ENCODE measurements at regions of chr19 and their contacts with region 1.

Region 1: DNA sequence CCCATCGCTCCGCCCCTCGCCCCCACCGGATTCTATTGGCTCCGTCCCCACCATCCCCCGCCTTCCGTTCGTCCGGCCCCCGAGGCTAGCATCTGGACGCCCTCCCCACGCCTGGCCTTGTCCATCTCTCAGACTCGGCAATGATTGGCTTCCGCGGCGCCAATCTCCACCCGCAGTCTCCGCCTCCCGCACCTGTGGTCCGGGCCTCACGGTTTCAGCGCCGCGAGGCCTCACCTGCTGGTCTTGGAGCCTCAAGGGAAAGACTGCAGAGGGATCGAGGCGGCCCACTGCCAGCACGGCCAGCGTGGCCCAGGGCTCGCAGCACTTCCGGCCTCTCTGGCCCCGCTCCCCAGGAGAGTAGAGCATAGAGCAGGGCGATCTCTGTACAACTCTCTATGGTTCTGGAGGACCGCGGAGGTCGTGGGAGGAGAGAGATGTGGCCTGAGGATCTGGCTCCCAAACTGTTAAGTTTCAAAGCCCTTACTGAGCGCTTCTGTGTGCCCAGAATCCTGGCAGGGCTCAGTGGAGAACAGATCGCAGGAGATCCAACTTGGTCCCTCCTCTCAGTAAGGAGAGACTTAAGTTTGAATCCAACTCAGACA is at the start of gene ERCC1:
- DNase-seq: peak; percentile 94 to 95
- ATAC-seq: peak; percentile 81 to 90 (median 86)
- H3K4me3 ChIP-seq: peak within 1 kb of the TSS; percentile 42 to 81 (median 72)
- H3K27ac ChIP-seq: peak within 1 kb of the TSS; percentile 34 to 96 (median 92)
- H3K4me1 ChIP-seq: peaks cover 4 to 68% (median 45%) of the 10 kb centered on the region in 9 donors
- H3K27me3 ChIP-seq: peaks cover 0 to 7% (median 0%) of the 10 kb centered on the region in 7 donors
- CTCF ChIP-seq: no peak
- total RNA-seq, gene ERCC1: 113 to 194 (median 136) TPM

Region 2: DNA sequence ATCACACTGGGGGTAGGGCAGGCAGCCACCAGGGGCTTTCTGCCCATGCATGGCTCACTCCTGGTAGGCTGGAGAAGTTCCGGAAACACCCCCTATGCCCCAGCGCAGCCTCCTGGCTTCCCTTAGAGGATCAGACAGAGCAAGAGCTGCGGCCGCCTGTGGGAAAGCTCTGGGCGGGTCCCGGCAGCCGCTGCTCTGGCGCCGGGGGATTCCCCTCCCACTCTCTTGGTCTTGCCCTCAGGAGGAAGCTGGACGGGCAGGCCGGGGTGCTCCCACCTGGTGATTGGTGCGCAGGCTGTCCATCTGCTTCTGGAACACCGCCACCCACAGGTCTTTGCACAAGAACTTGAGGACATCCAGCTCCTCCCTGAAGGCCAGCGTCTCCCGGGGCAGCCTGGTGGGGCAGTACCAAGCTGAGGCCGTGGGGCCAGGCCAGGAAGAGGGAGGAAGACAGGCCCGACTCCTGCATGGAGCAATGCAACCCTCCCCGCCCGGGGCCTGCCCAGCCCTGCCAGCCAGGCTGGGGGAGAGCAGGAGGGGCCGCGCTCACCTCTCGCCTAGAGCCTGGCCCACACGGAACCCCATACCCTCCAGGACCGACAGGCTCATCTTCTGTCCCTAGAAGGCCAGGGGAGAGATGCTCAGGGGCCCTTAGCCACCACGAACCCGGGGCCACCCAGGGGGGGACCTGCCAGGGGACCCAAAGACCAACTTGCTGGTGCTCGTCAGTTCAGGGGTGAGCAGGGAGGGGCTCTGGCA is 258.9 kb before region 1 on chr19:
- intact Hi-C with region 1: no loop called
- DNase-seq: peak; percentile 36 to 37
- ATAC-seq: peak; percentile 31 to 73 (median 61)
- H3K4me3 ChIP-seq: no peak overlapping the region
- H3K27ac ChIP-seq: peak overlapping the region in 2 of 10 donors; percentile 19 to 35
- H3K4me1 ChIP-seq: peaks cover 7 to 36% (median 26%) of the 10 kb centered on the region in 9 donors
- H3K27me3 ChIP-seq: peaks cover 0 to 20% (median 15%) of the 10 kb centered on the region in 7 donors
- CTCF ChIP-seq: no peak

Region 3: GRCh38 chr19:45352914-45353796 is 70.5 kb before region 1 on chr19:
- intact Hi-C with region 1: no loop called
- DNase-seq: no peak
- ATAC-seq: no peak
- H3K4me3 ChIP-seq: no peak overlapping the region
- H3K27ac ChIP-seq: no peak overlapping the region
- H3K4me1 ChIP-seq: no peaks in the 10 kb centered on the region
- H3K27me3 ChIP-seq: peaks cover 0 to 1% (median 0%) of the 10 kb centered on the region in 7 donors
- CTCF ChIP-seq: no peak

Region 4: DNA sequence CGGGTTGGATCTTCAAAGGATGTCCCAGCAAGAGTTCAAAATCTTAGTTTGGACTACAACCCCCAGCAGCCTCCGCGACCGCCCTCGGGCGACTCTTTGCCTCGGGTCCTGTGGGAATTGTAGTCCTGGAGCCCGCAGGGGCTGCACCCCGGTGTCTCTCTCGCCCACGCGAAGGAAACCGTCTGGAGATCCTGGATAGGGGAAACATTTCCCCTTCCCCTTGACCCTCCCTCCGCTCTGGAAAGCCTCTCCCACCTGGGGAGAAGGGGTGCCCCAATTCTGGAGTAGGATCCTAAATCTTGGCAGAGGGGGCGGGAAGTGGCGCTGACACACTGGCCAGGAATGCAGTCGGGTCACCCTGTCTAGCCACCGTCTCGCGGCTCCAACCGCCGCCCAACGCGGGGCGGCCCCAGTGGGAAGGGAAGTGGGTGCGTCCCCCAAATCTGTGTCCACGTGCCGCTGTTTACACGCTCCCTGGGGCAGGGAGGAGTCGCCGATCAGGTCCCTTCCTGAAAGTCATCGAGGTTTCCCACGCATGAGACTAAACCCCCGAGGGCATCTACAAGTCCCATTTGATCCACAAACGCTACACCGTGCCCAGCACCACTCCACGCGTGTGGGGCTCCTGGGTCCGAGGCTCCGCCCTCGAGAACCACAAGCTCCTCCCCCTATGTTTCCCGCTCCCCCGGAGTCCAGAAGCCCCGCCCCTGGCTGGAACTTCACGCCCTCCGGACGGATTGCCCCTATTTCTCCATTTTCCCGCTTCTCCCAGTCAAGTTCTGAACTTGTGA is 18.1 kb before region 1 on chr19:
- intact Hi-C with region 1: loop called in 2 of 10 experiments (anchors 1 to 2 kb)
- DNase-seq: peak; percentile 87 to 94
- ATAC-seq: peak; percentile 55 to 85 (median 77)
- H3K4me3 ChIP-seq: peak overlapping the region; percentile 55 to 99 (median 72)
- H3K27ac ChIP-seq: peak overlapping the region; percentile 86 to 97 (median 94)
- H3K4me1 ChIP-seq: peaks cover 7 to 54% (median 44%) of the 10 kb centered on the region in 9 donors
- H3K27me3 ChIP-seq: peaks cover 0 to 32% (median 0%) of the 10 kb centered on the region in 7 donors
- CTCF ChIP-seq: no peak

Region 5: DNA sequence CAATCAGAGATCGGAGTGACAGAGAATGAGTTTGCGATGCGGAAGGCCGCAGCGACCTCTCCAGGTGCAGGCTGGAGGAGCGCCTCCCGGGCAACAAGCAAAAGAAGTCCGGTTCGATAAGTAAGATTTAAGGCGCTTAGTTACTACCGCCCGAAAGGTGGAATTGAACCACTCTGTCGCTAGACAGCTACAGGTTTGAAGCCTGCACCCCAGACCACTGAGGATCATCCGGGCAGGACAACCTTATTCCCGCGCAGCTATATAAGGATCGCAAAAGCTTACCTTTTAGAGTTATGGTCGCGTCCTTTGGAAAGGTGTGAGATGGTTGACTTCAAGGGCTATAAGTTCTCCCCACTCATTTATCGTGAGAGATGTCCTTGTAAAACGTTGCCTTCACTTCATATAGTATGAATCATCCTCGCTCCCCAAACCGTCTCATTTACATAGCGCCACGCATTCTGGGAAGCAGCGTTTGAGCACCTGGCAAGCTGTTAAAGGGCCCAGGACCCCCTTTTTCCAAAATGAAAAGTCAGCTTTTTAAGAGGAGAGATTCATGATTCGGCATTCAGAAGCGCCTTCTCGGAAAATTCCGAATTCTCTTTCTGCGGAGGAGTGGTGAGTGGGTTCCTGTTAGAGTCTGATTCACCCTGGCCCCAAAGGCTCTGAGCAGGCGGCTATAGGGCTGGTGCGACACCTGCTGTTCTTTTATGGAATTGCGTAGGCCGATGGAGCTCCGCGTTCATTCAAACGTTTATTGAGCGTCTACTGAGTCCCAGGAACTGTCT is 55.0 kb after region 1 on chr19:
- intact Hi-C with region 1: loop called in 2 of 10 experiments (anchors 1 to 10 kb)
- DNase-seq: peak; percentile 80 to 86
- ATAC-seq: peak; percentile 84 to 97 (median 94)
- H3K4me3 ChIP-seq: peak overlapping the region in 9 of 10 donors; percentile 37 to 71 (median 61)
- H3K27ac ChIP-seq: peak overlapping the region; percentile 86 to 100 (median 94)
- H3K4me1 ChIP-seq: peaks cover 0 to 29% (median 11%) of the 10 kb centered on the region in 9 donors
- H3K27me3 ChIP-seq: peaks cover 0 to 21% (median 0%) of the 10 kb centered on the region in 7 donors
- CTCF ChIP-seq: peak; percentile 90 to 99 (median 97)

Region 6: DNA sequence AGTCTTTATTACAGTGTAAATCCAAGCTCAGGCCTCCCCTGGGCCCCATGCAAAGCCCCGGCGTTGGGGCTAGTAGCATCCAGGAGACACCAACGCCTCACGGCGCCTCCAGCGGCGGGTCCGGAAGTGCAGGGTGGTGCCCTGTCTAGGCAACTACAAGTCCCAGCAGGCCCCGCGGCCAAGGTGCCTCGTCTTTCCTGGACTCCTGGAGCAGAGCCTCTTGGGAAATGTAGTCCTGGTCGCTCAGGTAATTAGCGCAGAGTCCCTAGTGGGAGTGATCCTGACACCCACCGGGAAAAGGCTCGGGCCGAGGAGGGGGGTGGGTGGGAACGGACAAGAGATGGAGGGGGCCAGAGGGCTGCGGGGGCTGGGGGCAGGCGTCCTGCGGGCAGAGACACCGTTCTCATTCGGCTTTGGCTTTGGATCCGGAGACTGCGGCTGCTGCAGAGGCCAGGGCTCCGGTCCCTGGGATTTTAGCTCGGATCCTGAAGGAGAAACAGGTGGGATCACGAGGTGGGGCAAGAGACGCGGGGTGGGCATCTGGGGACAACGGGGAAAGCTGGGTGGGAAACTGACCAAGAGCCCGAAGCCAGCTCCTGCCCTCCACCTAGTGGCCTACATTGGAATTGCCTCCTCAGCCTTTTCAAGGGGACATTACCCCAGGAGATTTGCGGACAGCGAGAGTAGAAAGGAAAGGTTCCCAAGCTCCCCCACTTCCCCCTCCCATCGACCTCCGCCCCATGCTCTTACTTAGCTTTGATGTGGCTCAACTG is 61.8 kb after region 1 on chr19:
- intact Hi-C with region 1: loop called in 1 of 10 experiments (anchors 2 kb)
- DNase-seq: peak; percentile 98 to 99
- ATAC-seq: peak; percentile 97 to 99 (median 98)
- H3K4me3 ChIP-seq: peak overlapping the region; percentile 59 to 87 (median 72)
- H3K27ac ChIP-seq: peak overlapping the region in 9 of 10 donors; percentile 76 to 86 (median 81)
- H3K4me1 ChIP-seq: peaks cover 0 to 5% (median 0%) of the 10 kb centered on the region in 9 donors
- H3K27me3 ChIP-seq: no peaks in the 10 kb centered on the region
- CTCF ChIP-seq: peak; percentile 67 to 86 (median 74)

Region 7: DNA sequence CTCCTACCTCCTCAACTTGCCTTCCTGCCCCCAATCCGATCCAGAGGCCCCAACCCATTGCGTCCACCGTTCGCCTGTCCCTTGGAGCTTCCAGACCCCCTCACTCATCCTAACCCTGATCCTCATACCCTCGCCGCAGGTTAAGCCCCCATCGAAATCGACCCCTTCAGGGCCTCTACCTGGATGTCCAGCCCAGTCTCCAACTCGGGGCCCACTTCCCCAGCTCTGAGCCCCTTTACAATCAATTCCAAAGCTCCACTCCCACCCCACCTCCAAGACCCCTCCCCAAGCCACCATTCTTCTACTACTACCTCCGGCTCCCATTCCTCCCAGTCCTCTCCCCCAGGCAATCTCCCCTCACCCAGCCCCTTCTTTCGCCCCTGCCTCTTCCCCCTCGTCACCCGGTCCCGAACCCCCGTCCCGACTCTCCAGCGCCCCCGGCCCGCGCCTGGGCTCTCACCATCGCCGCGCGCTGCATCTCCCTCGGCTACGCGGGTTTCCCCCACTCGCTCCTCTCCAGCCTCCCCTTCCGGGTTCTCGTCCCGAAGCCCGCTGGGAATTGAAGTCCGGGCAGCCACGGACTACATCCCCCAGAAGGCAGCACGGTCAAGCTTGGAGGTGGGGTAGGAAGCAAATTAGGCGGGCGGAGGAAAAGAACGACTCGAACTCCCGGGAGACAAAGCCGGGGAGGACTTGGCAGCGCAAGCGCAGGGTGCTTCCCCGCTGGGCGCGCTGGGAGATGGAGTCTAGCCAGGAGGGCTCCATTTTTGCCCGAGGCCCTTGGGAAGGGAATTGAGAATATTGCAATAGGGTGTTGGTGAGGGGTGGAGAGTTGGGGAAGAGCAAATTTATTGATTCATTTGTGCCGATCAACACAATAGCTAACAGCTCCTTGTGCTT is 306.9 kb after region 1 on chr19 and contains the start of gene FBXO46:
- intact Hi-C with region 1: no loop called
- DNase-seq: peak; percentile 95 to 99
- ATAC-seq: peak; percentile 97 to 99 (median 99)
- H3K4me3 ChIP-seq: peak within 1 kb of the TSS; percentile 43 to 84 (median 78)
- H3K27ac ChIP-seq: peak within 1 kb of the TSS in 8 of 10 donors; percentile 41 to 85 (median 73)
- H3K4me1 ChIP-seq: peaks cover 2 to 28% (median 16%) of the 10 kb centered on the region in 9 donors
- H3K27me3 ChIP-seq: no peaks in the 10 kb centered on the region
- CTCF ChIP-seq: peak in 2 of 9 donors; percentile 10 to 14
- total RNA-seq, gene FBXO46: 5.2 to 13.5 (median 9.1) TPM

Measured in heart right ventricle (tissue), 16 donors.